ENCODE measurements at regions of chr15 and their contacts with region 1.

Region 1: GRCh38 chr15:101641166-101641764 is 10.9 kb downstream of the TM2D3 start:
- DNase-seq: peak; percentile 86
- ATAC-seq: peak; percentile 69
- H3K4me3 Mint-ChIP-seq: no peak overlapping the region
- H3K27ac Mint-ChIP-seq: peak overlapping the region; percentile 78
- H3K4me1 Mint-ChIP-seq: peaks cover 17% of the 10 kb centered on the region
- H3K27me3 Mint-ChIP-seq: no peaks in the 10 kb centered on the region

Region 2: GRCh38 chr15:101288908-101289513 is 352.3 kb before region 1 on chr15:
- CTCF ChIA-PET with region 1: interaction called, 202 read pairs
- POLR2A ChIA-PET with region 1: interaction called, 13 read pairs
- DNase-seq: peak; percentile 51
- ATAC-seq: peak; percentile 54
- H3K4me3 Mint-ChIP-seq: no peak overlapping the region
- H3K27ac Mint-ChIP-seq: peak overlapping the region; percentile 52
- H3K4me1 Mint-ChIP-seq: peaks cover 55% of the 10 kb centered on the region
- H3K27me3 Mint-ChIP-seq: no peaks in the 10 kb centered on the region

Region 3: GRCh38 chr15:101303408-101303807 is 337.9 kb before region 1 on chr15:
- CTCF ChIA-PET with region 1: interaction called, 202 read pairs
- POLR2A ChIA-PET with region 1: no interaction called
- DNase-seq: no peak
- ATAC-seq: no peak
- H3K4me3 Mint-ChIP-seq: no peak overlapping the region
- H3K27ac Mint-ChIP-seq: no peak overlapping the region
- H3K4me1 Mint-ChIP-seq: peaks cover 4% of the 10 kb centered on the region
- H3K27me3 Mint-ChIP-seq: no peaks in the 10 kb centered on the region

Region 4: GRCh38 chr15:101501703-101502373 is 139.4 kb before region 1 on chr15:
- CTCF ChIA-PET with region 1: interaction called, 14 read pairs
- POLR2A ChIA-PET with region 1: no interaction called
- DNase-seq: peak; percentile 69
- ATAC-seq: peak; percentile 87
- H3K4me3 Mint-ChIP-seq: peak overlapping the region; percentile 38
- H3K27ac Mint-ChIP-seq: no peak overlapping the region
- H3K4me1 Mint-ChIP-seq: peaks cover 21% of the 10 kb centered on the region
- H3K27me3 Mint-ChIP-seq: peaks cover 17% of the 10 kb centered on the region

Region 5: DNA sequence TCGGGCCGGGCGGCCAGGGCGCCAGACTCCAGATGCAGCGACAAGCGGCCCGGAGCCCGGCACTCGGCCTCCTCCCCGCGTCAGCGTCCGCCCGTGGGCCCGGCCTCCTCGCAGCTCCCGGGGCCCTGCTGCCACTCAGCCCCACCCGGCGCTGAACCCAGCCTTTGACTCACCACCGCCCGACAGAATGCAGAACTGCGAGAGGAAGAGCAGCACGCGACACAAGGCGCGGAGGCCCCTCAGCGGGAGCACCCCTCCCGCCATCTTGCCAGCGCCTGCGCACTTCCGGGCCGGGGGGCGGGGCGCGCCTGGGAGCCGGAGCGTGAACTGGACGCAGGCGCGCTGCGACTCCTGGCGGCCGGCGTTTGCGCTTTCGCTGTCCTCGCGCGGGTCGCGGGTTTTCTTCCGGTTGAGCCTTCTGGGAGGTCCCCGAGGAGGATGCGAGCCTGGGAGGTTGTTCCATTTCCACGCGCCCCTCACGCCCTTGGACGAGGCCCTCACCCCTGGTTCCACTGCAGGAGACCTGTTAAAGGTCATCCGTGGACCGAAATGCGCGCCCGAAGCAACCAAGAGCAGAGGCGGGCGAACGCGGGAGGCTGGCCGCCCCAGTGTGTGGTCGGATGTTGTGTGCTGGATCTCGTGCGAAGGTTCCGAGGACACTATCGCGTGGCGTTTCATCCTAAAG is 11.0 kb after region 1 on chr15 and contains the start of gene TM2D3:
- CTCF ChIA-PET with region 1: interaction called, 25 read pairs
- POLR2A ChIA-PET with region 1: interaction called, 4 read pairs
- DNase-seq: peak; percentile 95
- ATAC-seq: peak; percentile 95
- H3K4me3 Mint-ChIP-seq: peak within 1 kb of the TSS; percentile 93
- H3K27ac Mint-ChIP-seq: peak within 1 kb of the TSS; percentile 94
- H3K4me1 Mint-ChIP-seq: peaks cover 41% of the 10 kb centered on the region
- H3K27me3 Mint-ChIP-seq: no peaks in the 10 kb centered on the region
- total RNA-seq, gene TM2D3: 36.8 to 38.8 TPM

Measured in activated CD8-positive, alpha-beta T cell treated with anti-CD3 and anti-CD28 coated beads, Interleukin-2, amount 10 ng/mL, durations not matched to agents 7 days and 5 days (primary cell).